ENCODE measurements at regions of chr2 and their contacts with region 1.

Region 1: GRCh38 chr2:181715033-181715630 is 34.8 kb upstream of the NEUROD1 start:
- DNase-seq: peak; percentile 49 to 73 (median 54)
- ATAC-seq: peak; percentile 54 to 63
- H3K4me3 ChIP-seq: no peak overlapping the region
- H3K27ac ChIP-seq: no peak overlapping the region
- H3K4me1 ChIP-seq: no peaks in the 10 kb centered on the region
- H3K27me3 ChIP-seq: peaks cover 2% of the 10 kb centered on the region

Region 2: DNA sequence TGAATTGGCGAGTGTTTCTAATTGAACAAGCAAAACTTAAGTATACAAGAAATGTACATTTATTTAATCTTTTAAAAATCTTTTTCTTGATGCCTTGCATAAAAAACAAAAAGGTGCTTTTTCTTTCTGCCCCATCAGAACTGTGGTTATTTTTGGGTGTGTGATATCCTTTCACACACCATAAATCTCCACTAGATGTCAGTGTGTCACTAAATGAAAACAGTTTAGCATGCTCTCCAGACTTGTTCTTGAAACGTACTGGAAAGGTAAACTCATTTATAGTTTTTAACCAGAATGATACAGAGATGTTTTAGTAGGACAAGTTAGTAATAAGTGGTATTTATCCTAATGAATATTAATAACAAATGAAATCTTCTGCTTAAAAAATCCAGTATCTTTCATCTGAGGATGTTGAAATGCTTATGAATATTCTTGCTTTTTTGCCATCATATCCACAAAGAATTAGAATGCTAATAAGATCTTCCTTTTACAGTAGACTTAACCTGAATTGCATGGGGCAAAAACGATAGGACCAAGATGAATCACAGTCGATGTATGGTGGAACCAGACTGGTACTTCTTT is 637.9 kb before region 1 on chr2:
- intact Hi-C with region 1: loop called in 2 of 4 experiments (anchors 10 kb)
- DNase-seq: no peak
- ATAC-seq: peak in 1 of 2 donors; percentile 67
- H3K4me3 ChIP-seq: no peak overlapping the region
- H3K27ac ChIP-seq: no peak overlapping the region
- H3K4me1 ChIP-seq: no peaks in the 10 kb centered on the region
- H3K27me3 ChIP-seq: no peaks in the 10 kb centered on the region

Region 3: GRCh38 chr2:181104512-181105115 is 610.5 kb before region 1 on chr2:
- intact Hi-C with region 1: loop called in 2 of 4 experiments (anchors 10 kb)
- DNase-seq: no peak
- ATAC-seq: no peak
- H3K4me3 ChIP-seq: no peak overlapping the region
- H3K27ac ChIP-seq: no peak overlapping the region
- H3K4me1 ChIP-seq: no peaks in the 10 kb centered on the region
- H3K27me3 ChIP-seq: peaks cover 4% of the 10 kb centered on the region

Region 4: DNA sequence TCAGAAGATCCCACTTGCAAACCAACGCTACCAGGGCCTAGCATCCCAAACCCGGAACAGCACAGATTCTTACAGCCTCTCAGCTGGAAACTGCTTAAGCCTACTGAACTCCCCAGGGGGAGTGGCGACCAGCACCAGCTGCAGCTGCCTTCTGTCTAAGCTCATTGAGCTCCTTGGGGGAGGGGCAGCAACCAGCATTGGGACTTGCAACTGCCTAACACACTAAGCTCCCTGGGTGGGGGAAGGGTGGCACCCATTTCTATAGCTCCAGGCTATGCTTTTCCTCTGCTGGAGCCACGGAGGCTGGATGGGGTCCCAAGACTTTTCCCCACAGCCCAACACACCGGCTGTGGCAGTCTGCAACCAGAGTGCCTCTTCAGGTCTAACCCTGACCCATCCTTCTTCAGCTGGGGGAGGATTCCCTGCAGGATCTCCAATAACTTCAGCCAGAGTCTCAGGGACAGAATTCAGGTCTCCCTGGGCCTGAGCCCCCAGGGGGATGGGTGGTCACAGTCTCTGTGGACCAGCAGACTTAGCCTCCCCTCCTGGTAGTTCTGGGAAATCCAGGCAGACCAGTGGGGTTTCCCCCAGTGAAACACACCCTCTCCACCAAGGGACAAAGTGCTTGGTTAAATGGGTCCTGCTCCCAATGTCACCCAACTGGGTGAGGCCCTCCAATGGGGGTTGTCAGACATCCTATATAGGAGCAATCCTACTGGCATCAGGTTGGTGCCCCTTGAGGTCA is 303.9 kb before region 1 on chr2:
- intact Hi-C with region 1: no loop called
- DNase-seq: no peak
- ATAC-seq: no peak
- H3K4me3 ChIP-seq: no peak overlapping the region
- H3K27ac ChIP-seq: no peak overlapping the region
- H3K4me1 ChIP-seq: no peaks in the 10 kb centered on the region
- H3K27me3 ChIP-seq: no peaks in the 10 kb centered on the region

Region 5: GRCh38 chr2:181573140-181573736 is 141.9 kb before region 1 on chr2:
- intact Hi-C with region 1: loop called in 1 of 4 experiments (anchors 10 kb)
- DNase-seq: no peak
- ATAC-seq: no peak
- H3K4me3 ChIP-seq: no peak overlapping the region
- H3K27ac ChIP-seq: no peak overlapping the region
- H3K4me1 ChIP-seq: no peaks in the 10 kb centered on the region
- H3K27me3 ChIP-seq: no peaks in the 10 kb centered on the region

Region 6: GRCh38 chr2:182066400-182067087 is 351.4 kb after region 1 on chr2:
- intact Hi-C with region 1: no loop called
- DNase-seq: no peak
- ATAC-seq: peak; percentile 32 to 36
- H3K4me3 ChIP-seq: no peak overlapping the region
- H3K27ac ChIP-seq: no peak overlapping the region
- H3K4me1 ChIP-seq: peaks cover 2% of the 10 kb centered on the region
- H3K27me3 ChIP-seq: no peaks in the 10 kb centered on the region

Measured in right cardiac atrium (tissue), 5 donors.